ENCODE measurements at regions of chr1 and their contacts with region 1.

Region 1: GRCh38 chr1:44002606-44003157 is 11.3 kb downstream of the CCDC24 start:
- DNase-seq: no peak
- H3K4me3 ChIP-seq: no peak overlapping the region
- H3K27ac ChIP-seq: no peak overlapping the region
- H3K4me1 ChIP-seq: no peaks in the 10 kb centered on the region
- H3K27me3 ChIP-seq: no peaks in the 10 kb centered on the region
- CTCF ChIP-seq: peak; percentile 43

Region 2: GRCh38 chr1:42456010-42456758 is 1546.5 kb before region 1 on chr1 and contains the starts of genes PPCS and ZMYND12:
- CTCF ChIA-PET with region 1: no interaction called
- POLR2A ChIA-PET with region 1: no interaction called
- intact Hi-C with region 1: no loop called
- DNase-seq: peak; percentile 87
- H3K4me3 ChIP-seq: peak within 1 kb of the TSS; percentile 72
- H3K27ac ChIP-seq: peak within 1 kb of the TSS; percentile 84
- H3K4me1 ChIP-seq: peaks cover 8% of the 10 kb centered on the region
- H3K27me3 ChIP-seq: peaks cover 6% of the 10 kb centered on the region
- CTCF ChIP-seq: no peak
- total RNA-seq, gene PPCS: 34.4 and 35.7 TPM in 2 replicates
- total RNA-seq, gene ZMYND12: 0.17 and 0.28 TPM in 2 replicates

Region 3: DNA sequence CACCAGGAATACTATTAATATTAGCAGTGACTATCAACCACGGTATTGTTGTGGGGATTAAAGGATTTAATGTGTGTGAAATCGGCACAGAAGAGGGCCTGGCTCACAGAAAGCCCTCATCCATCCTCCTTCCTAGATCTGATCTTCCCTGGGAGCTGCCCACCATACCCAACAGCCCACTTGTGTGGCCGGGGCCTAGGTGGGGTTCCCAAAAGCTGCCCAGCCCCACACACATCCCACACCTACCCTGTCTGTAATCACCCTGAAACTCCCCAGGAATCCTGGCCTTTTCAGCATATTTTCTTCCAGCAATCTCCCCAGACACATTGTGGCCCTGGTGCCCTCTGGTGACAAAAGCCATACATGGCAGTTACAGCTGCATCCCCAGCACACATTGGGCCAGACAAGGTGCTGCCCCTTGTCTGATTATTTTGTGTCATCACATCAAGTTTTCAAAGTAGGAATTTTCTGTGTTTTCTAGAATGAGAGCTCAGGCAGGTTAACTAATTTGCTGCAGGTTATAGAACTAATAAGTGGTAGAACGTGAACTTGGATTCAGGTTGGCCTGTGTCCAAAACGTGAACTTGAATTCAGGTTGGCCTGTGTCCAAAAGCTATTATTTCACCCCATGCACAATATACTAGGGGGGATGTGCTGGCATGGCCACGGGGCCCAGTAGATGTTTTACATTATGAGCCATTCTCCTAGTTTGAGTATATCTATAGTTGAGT is 33.9 kb after region 1 on chr1:
- CTCF ChIA-PET with region 1: interaction called, 9 read pairs
- POLR2A ChIA-PET with region 1: interaction called, 3 read pairs
- intact Hi-C with region 1: loop called (anchors 1 kb)
- DNase-seq: peak; percentile 87
- H3K4me3 ChIP-seq: no peak overlapping the region
- H3K27ac ChIP-seq: peak overlapping the region; percentile 28
- H3K4me1 ChIP-seq: peaks cover 26% of the 10 kb centered on the region
- H3K27me3 ChIP-seq: no peaks in the 10 kb centered on the region
- CTCF ChIP-seq: peak; percentile 93

Measured in A673 (cell line).